AG04449 (cell line): ENCODE measurements at regions of chr9 and their contacts with region 1.

Region 1: GRCh38 chr9:129131300-129132145 is 20.3 kb downstream of the PTPA start:
- DNase-seq: no peak
- H3K4me3 ChIP-seq: no peak overlapping the region
- CTCF ChIP-seq: peak; percentile 99

Region 2: DNA sequence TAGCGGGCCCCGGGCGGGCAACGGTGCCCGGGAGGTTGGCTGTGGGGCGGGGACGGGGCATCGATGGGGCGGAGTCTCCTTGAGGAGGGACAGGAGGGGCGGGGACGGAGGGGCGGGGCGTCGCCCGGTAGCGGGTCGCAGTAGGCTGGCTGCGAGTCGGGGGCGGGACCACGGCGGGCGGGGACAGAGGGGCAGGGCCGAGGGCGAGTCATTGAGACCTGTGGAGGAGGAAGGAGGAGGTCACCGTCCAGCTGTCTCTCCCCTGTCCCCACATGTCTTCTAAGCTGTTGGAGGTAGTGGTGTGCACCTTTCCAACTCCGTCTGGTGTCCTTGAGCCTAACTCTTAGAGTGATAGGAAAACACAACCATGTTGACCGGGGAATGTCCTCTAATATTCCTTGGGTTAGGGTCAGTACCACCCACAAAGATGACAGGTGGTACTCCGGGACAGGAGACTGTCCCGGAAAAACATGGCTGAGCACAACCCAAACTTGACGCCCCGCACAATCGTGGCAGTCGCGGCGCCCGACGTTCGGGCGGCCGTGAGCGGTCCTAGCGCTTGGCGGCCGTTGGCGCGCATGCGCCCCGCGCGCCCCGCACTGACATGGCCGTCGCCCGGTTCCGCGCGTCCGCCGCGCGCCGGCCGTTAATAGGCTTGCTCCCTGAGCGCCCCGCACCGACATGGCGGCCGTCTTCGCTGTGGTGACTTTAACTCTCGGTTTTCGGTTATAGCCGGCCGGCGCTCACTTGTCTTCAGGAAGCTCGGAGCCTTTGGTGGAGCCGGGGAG is 20.6 kb before region 1 on chr9 and contains the starts of genes CRAT and PTPA:
- CTCF ChIA-PET with region 1: interaction called, 64 read pairs
- POLR2A ChIA-PET with region 1: no interaction called
- DNase-seq: no peak
- H3K4me3 ChIP-seq: peak within 1 kb of the TSS; percentile 93
- CTCF ChIP-seq: no peak

Region 3: DNA sequence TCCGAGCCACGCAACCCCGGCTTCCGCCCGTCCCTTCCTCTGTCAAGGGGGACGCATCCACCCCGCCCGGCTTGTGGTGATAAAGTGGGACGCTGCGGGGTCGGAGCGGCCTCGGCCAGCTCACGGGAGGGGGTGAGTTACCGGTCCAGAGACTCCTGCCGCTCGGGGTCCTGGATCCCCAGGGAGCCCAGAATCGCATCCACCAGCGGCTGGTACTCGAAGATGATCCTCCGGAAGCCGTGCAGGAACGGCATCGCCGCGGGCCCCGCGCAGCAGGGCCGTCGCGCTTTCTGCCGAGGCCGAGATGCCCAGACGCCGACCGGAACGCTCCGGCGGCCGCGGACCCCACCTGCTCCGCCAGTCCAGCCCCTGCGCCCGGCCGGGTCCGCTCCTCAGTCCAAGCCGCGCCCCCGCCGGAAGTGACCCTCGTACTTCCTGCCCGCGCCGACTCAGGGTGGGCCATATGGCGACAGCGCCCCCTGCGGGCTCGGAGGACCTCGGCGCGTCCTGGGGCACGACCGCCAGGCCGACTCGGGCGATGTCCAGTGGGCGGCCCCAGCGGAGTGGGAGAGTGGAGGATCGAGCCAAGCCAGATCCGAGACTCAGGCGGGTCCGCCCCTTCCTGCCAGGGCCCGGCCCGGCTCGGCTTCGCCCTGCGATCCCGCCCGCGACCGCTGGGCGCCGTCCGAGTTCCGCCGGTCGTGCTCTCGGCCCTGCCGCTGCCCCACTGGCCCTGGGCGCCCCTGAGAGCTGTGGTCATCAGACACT is 510.4 kb after region 1 on chr9 and contains the start of gene ASB6:
- CTCF ChIA-PET with region 1: interaction called, 51 read pairs
- POLR2A ChIA-PET with region 1: no interaction called
- DNase-seq: peak; percentile 69
- H3K4me3 ChIP-seq: peak within 1 kb of the TSS; percentile 87
- CTCF ChIP-seq: peak; percentile 89